ENCODE measurements at regions of chr2 and their contacts with region 1.

Region 1: GRCh38 chr2:71250945-71251344 is 24.0 kb upstream of the PAIP2B start:
- DNase-seq: no peak
- H3K4me3 ChIP-seq: no peak overlapping the region
- H3K27ac ChIP-seq: no peak overlapping the region
- H3K4me1 ChIP-seq: no peaks in the 10 kb centered on the region
- CTCF ChIP-seq: no peak

Region 2: DNA sequence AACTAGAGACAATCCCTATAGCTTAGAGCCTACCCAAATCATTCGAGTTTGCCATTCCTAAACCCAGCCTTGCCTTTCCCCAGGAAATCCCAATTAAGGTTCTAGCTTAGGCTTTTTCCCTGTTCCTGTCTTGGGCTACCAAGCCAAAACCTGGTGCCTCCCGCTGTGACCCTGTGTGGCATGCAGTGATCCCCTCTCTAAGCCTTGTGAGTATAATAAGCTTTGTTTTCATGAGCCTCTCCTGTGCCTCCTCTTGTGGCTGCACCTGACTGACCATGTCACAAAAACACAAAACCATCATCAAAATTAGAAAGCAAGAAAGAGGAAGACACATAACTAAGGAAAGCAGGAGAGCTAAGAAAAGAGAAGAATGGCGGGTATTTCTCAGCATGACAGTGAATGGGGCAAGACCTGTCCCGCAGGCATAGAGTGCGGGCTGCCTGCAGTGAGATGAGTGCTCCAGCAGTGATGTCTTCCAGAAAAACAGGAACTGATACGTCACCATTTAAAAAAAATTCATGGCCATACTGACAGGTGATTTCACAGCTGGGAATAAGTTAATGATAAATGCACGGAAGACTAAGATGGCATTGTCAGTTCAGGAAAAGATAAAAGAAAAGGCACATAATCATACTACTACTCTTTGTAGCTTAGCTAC is 14.9 kb before region 1 on chr2:
- CTCF ChIA-PET with region 1: no interaction called
- POLR2A ChIA-PET with region 1: interaction called, 10 read pairs
- intact Hi-C with region 1: no loop called
- DNase-seq: peak; percentile 63
- H3K4me3 ChIP-seq: peak overlapping the region; percentile 2
- H3K27ac ChIP-seq: peak overlapping the region; percentile 43
- H3K4me1 ChIP-seq: peaks cover 18% of the 10 kb centered on the region
- CTCF ChIP-seq: no peak

Region 3: GRCh38 chr2:71452565-71452964 is 201.6 kb after region 1 on chr2:
- CTCF ChIA-PET with region 1: no interaction called
- POLR2A ChIA-PET with region 1: no interaction called
- intact Hi-C with region 1: no loop called
- DNase-seq: peak; percentile 23
- H3K4me3 ChIP-seq: no peak overlapping the region
- H3K27ac ChIP-seq: no peak overlapping the region
- H3K4me1 ChIP-seq: peaks cover 10% of the 10 kb centered on the region
- CTCF ChIP-seq: peak; percentile 47

Measured in OCI-LY7 (cell line).